ENCODE measurements at regions of chr16 and their contacts with region 1.

Region 1: GRCh38 chr16:77090062-77090461 is 100.9 kb upstream of the MON1B start:
- DNase-seq: no peak
- H3K27ac ChIP-seq: no peak overlapping the region
- CTCF ChIP-seq: no peak

Region 2: DNA sequence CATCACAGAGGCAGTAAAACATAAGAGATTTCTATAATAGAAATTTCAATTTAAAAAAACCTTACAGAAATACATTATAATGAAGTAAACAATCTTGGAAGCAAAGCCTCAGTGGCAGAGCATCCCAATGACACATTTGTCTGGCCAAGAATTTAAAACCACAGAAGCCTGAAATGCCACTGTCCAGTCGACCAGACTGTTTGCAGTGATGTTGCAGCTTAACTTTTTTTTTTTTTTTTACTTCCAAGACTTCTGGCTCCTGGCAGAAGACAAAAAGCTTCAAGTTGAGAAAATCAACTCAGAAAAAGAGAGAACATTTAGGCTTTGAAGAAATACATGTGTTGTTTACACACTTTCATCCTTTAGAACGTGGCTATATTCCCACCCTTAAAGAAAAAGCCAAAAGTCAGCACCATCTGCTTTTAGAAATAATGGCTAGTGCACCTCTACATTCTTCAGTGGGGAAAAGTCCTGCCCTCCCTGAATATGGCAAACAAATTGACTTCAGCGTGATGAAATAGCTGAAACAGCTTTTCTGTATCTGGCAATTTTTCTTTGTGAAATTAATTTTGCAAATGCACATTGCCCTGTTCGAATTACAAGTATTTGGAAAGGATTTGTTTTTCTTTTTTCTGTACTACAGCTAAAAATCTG is 104.5 kb before region 1 on chr16:
- CTCF ChIA-PET with region 1: no interaction called
- POLR2A ChIA-PET with region 1: no interaction called
- DNase-seq: no peak
- H3K27ac ChIP-seq: no peak overlapping the region
- CTCF ChIP-seq: no peak

Region 3: DNA sequence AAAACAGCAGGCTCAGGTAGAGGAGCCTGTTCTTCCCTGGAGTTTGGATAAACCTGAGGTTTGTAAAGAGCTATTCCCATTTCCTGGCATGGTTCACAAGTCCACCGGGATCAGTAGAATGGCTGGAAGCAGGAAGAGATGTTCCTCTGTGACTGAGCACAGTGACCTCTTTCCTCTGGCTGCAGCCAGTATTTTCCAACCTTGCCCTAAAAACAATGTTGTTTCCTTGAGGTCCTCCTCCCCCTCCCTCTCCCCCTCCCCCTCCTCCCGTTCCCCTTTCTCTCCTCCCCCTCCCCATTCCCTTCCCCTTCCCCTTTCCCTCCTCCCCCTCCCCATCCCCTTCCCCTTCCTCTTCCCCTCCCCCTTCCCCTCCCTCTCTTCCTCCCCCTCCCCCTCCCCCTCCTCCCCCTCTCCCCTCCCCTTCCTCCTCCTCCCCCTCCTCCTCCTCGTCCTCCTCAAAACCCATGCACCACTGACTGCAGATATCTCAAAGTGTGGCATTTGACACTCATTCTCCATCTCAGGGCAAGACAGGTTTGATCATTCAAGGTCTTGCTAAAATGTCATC is 42.1 kb after region 1 on chr16:
- CTCF ChIA-PET with region 1: interaction called, 10 read pairs
- POLR2A ChIA-PET with region 1: no interaction called
- DNase-seq: no peak
- H3K27ac ChIP-seq: no peak overlapping the region
- CTCF ChIP-seq: no peak

Region 4: DNA sequence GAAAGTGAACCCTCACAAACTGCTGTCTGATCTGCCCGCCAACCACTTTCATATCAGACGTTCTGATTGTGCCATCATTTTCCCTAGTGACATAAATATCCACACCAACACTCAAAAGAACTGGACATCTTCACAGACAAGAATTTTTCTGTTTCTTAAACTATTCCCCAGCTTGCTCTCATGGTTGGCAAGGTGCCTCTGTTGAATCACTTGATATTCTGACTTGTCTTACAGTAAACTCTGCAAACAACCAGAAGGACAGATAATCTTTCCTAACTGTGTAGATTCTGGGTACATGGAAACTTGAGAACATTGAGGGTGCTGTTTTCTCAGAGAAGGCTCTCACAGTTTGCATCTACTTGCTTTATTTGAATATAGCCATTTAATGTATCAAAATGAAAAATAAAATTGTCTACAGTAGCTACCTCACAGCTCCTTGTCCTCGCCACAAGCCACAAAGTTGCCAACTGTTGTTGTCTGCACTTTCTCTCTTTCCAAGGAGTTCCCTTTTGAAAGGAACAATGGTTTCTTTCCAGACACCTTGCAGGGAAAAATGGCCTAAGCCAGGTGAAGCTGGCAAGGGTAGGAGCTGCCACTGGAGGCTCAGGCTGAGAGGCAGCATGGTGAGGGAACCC is 390.7 kb after region 1 on chr16:
- CTCF ChIA-PET with region 1: no interaction called
- POLR2A ChIA-PET with region 1: no interaction called
- DNase-seq: no peak
- H3K27ac ChIP-seq: no peak overlapping the region
- CTCF ChIP-seq: no peak